ENCODE measurements at regions of chr1 and their contacts with region 1.

Region 1: DNA sequence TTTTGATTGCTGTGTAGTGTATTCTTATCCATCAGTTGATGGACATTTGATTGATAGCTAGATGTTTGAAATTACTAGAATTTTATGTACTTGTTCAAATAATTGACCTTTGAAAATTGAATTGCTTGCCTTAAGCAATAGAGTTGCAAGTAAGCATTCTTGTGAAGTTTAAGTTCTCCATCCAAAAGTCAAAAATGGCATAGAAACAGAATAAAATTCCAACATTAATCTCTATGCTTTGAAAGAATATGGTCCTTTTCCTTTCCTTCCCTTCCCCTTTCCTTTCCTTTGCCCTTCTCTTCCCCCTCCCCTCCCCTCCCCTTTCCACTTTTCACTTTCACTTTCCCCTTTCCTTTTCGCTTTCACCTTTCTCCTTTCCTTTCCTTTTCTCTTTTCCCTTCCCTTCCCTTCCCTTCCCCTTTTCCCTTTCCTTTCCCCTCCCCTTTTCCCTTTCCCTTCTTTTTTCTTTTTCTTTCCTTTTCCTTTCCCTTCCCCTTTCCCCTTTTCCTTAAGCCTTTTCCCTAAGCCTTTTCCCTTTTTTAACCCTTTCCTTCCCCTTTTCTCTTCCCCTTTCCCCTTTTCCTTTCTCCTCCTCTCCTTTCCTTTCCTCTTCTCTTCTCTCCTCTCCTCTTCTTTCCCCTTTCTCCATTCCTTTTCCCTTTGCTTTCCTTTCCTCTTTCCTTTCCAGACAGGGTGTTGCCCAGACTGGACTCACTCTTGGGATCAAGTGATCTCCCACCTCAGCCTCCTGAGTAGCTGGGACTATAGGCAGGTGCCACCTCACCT is 67.4 kb downstream of the SASS6 start:
- DNase-seq: no peak
- ATAC-seq: no peak
- H3K4me3 ChIP-seq: no peak overlapping the region
- H3K4me3 Mint-ChIP-seq: no peak overlapping the region
- H3K27ac ChIP-seq: peak overlapping the region in 1 of 2 donors; percentile 55
- H3K27ac Mint-ChIP-seq: no peak overlapping the region
- H3K4me1 ChIP-seq: peaks cover 0 to 9% of the 10 kb centered on the region in 2 donors
- H3K4me1 Mint-ChIP-seq: peaks cover 9% of the 10 kb centered on the region
- H3K27me3 ChIP-seq: no peaks in the 10 kb centered on the region
- H3K27me3 Mint-ChIP-seq: no peaks in the 10 kb centered on the region
- CTCF ChIP-seq: peak; percentile 17

Region 2: DNA sequence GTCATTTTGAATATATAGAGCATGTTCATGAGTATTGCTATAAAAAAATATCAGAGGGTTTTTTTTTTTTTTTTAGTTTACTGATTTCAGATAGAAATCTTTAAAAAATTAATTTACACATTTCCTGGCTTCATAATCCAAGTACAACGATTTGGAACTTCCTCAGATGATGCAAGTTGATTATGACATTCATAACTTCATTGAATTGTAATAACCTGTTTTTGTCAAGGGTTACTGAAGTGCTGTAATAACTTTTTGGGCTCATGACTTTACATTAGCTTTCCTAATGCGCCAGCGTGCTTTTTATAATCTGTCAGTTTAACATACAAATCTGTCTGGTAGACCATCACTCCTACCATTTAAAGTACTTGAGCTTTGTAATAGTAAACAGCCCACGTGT is 14.0 kb before region 1 on chr1:
- CTCF ChIA-PET with region 1: no interaction called
- POLR2A ChIA-PET with region 1: interaction called, 10 read pairs
- intact Hi-C with region 1: no loop called
- DNase-seq: no peak
- ATAC-seq: no peak
- H3K4me3 ChIP-seq: no peak overlapping the region
- H3K4me3 Mint-ChIP-seq: no peak overlapping the region
- H3K27ac ChIP-seq: no peak overlapping the region
- H3K27ac Mint-ChIP-seq: no peak overlapping the region
- H3K4me1 ChIP-seq: peaks cover 19 to 24% of the 10 kb centered on the region in 2 donors
- H3K4me1 Mint-ChIP-seq: peaks cover 39% of the 10 kb centered on the region
- H3K27me3 ChIP-seq: no peaks in the 10 kb centered on the region
- H3K27me3 Mint-ChIP-seq: no peaks in the 10 kb centered on the region
- CTCF ChIP-seq: no peak

Measured in B cell (primary cell).